ENCODE measurements at regions of chr12 and their contacts with region 1.

Region 1: DNA sequence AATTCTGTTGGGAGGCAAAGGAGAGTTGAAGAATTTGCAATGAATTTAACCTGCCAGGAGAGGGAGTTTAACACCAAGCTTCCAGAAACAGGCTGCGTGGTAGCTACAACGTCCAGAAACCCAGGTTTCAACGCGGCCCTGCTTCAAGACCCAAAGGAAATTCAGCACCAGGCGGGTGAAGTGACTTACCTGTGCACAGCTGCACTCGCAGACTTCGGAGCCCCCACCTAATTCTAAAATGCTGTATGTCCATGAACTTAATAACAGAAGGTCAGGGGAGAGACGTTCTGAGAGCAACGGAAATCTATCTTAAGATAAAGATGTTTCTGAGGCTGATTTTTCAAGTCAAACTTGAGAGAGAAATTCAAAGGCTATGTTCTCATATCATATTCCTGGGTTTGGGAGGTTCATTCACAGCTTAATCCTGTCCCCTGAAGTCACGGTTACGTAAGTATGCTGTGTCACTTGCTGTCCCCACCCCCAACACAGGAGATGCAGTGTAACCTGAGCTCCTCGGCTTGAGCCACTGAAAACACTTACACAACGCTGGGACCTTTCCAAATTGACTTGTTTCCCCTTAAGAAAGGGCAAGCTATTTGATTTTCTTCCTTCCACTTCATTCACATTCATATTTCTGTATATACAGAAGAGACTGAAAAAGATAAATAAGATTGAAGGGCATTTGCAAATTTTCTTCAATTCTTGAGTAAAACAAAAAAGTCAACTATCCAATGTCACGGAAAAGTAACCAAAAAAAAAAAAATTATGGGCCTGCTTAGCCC is 22.7 kb downstream of the CLIP1 start:
- DNase-seq: peak in 1 of 2 experiments; percentile 60
- H3K4me3 ChIP-seq: peak overlapping the region in 3 of 4 experiments; percentile 32 to 51 (median 44); a peak in 5 of 8 replicates
- H3K27ac ChIP-seq: peak overlapping the region; percentile 74
- H3K4me1 ChIP-seq: peaks cover 3 to 8% (median 5%) of the 10 kb centered on the region in 4 experiments; a peak in 6 of 7 replicates
- H3K27me3 ChIP-seq: no peaks in the 10 kb centered on the region
- CTCF ChIP-seq: peak in 2 of 3 experiments; percentile 72 to 77; a peak in 3 of 4 replicates
- EP300 ChIP-seq: no peak
- POLR2A ChIP-seq: peak in 1 of 2 experiments; percentile 39; a peak in 1 of 3 replicates
- RAD21 ChIP-seq: peak; percentile 90 to 92

Region 2: DNA sequence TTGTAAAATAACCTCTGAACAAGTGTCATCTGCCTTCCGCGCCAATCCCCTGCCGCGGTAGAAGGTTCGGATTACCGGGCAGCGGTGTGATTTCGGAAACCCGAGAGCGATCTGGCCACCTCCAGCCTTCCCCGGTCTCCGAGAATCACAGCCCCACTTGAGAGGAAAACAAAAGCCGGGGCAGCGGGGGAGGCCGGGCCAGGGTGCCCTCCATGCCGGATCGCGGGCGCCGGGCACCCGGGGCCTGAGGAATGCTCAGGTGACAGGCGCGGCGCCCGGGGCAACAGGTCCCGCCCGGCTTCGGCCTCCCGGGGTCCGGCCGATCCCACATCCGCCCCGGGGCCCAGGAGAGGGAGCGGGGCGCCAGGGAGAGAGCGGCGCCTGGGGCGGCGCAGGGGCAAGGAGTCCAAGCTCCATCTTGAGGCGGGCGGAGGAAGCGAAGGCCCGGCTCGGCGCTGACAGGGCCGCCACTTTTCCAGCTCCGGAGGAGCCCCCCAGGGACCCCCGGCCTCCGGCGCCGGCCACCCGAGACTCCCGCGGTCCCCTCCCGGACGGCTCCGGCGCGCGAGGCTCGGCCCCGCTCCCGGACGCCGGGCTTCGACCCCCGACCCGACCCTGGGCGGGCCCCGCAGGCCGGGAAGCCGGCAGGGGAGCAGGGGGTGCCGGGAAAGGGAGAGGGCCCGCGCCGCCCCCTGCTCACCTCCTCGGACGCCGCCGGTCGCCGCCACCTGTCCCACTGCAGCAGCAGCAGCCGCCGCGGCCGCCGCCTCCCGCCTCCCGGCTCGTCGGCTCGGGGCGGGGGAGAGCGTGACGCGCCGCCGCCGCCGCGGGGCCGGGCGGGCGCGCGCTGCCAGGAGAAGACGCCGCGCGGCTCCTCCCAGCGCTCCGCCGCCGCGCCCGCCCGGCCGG is 22.3 kb after region 1 on chr12 and contains the start of gene CLIP1:
- CTCF ChIA-PET with region 1: interaction called, 22 read pairs
- POLR2A ChIA-PET with region 1: interaction called, 10 read pairs
- DNase-seq: peak in 1 of 2 experiments; percentile 81
- H3K4me3 ChIP-seq: peak within 1 kb of the TSS; percentile 67 to 81 (median 72)
- H3K27ac ChIP-seq: peak within 1 kb of the TSS; percentile 41; the same call in 1 of the 2 replicates
- H3K4me1 ChIP-seq: peaks cover 0 to 10% (median 4%) of the 10 kb centered on the region in 4 experiments; a peak in 3 of 7 replicates
- H3K27me3 ChIP-seq: no peaks in the 10 kb centered on the region
- CTCF ChIP-seq: peak; percentile 10 to 49 (median 48)
- EP300 ChIP-seq: no peak
- POLR2A ChIP-seq: peak; percentile 31 to 40
- RAD21 ChIP-seq: peak in 1 of 2 experiments; percentile 45; a peak in 2 of 4 replicates
- total RNA-seq, gene CLIP1: 26.6 and 27.6 TPM in 2 replicates

Region 3: GRCh38 chr12:122459211-122459610 is 59.4 kb after region 1 on chr12:
- CTCF ChIA-PET with region 1: interaction called, 10 read pairs
- POLR2A ChIA-PET with region 1: interaction called, 5 read pairs
- DNase-seq: no peak
- H3K4me3 ChIP-seq: no peak overlapping the region
- H3K27ac ChIP-seq: no peak overlapping the region
- H3K4me1 ChIP-seq: no peaks in the 10 kb centered on the region
- H3K27me3 ChIP-seq: no peaks in the 10 kb centered on the region
- CTCF ChIP-seq: no peak
- EP300 ChIP-seq: no peak
- POLR2A ChIP-seq: no peak
- RAD21 ChIP-seq: no peak

Region 4: GRCh38 chr12:122500685-122501488 is 101.1 kb after region 1 on chr12 and contains the start of gene ZCCHC8:
- CTCF ChIA-PET with region 1: interaction called, 4 read pairs
- POLR2A ChIA-PET with region 1: interaction called, 14 read pairs
- DNase-seq: peak; percentile 94 to 95
- H3K4me3 ChIP-seq: peak within 1 kb of the TSS; percentile 77 to 96 (median 94)
- H3K27ac ChIP-seq: peak within 1 kb of the TSS; percentile 90
- H3K4me1 ChIP-seq: peaks cover 0 to 3% (median 0%) of the 10 kb centered on the region in 4 experiments; a peak in 1 of 7 replicates
- H3K27me3 ChIP-seq: no peaks in the 10 kb centered on the region
- CTCF ChIP-seq: peak; percentile 5 to 24 (median 19); a peak in 2 of 4 replicates
- EP300 ChIP-seq: peak in 1 of 2 experiments; percentile 4; a peak in 1 of 3 replicates
- POLR2A ChIP-seq: peak; percentile 81 to 85
- RAD21 ChIP-seq: no peak
- total RNA-seq, gene ZCCHC8: 27.4 and 28.9 TPM in 2 replicates

Region 5: GRCh38 chr12:122558745-122559641 is 159.2 kb after region 1 on chr12:
- CTCF ChIA-PET with region 1: no interaction called
- POLR2A ChIA-PET with region 1: no interaction called
- DNase-seq: no peak
- H3K4me3 ChIP-seq: no peak overlapping the region
- H3K27ac ChIP-seq: no peak overlapping the region
- H3K4me1 ChIP-seq: no peaks in the 10 kb centered on the region
- H3K27me3 ChIP-seq: no peaks in the 10 kb centered on the region
- CTCF ChIP-seq: no peak
- EP300 ChIP-seq: no peak
- POLR2A ChIP-seq: no peak
- RAD21 ChIP-seq: no peak

Measured in H1 (cell line).